ENCODE measurements at regions of chr6 and their contacts with region 1.

Region 1: GRCh38 chr6:128655978-128656498 is 135.6 kb upstream of the PTPRK start:
- DNase-seq: peak; percentile 16
- H3K4me3 Mint-ChIP-seq: no peak overlapping the region
- H3K27ac Mint-ChIP-seq: peak overlapping the region; percentile 74
- H3K4me1 Mint-ChIP-seq: peaks cover 31% of the 10 kb centered on the region
- H3K27me3 Mint-ChIP-seq: peaks cover 10% of the 10 kb centered on the region

Region 2: GRCh38 chr6:128520436-128521281 is 135.4 kb before region 1 on chr6 and contains the start of gene PTPRK:
- CTCF ChIA-PET with region 1: no interaction called
- POLR2A ChIA-PET with region 1: no interaction called
- intact Hi-C with region 1: loop called (anchors 5 kb)
- DNase-seq: peak; percentile 92
- H3K4me3 Mint-ChIP-seq: peak within 1 kb of the TSS; percentile 85
- H3K27ac Mint-ChIP-seq: peak within 1 kb of the TSS; percentile 23
- H3K4me1 Mint-ChIP-seq: peaks cover 9% of the 10 kb centered on the region
- H3K27me3 Mint-ChIP-seq: peaks cover 55% of the 10 kb centered on the region
- total RNA-seq, gene PTPRK: 1.8 to 2.2 TPM

Region 3: GRCh38 chr6:128598565-128598964 is 57.5 kb before region 1 on chr6:
- CTCF ChIA-PET with region 1: no interaction called
- POLR2A ChIA-PET with region 1: no interaction called
- intact Hi-C with region 1: loop called (anchors 1 kb)
- DNase-seq: no peak
- H3K4me3 Mint-ChIP-seq: no peak overlapping the region
- H3K27ac Mint-ChIP-seq: no peak overlapping the region
- H3K4me1 Mint-ChIP-seq: peaks cover 6% of the 10 kb centered on the region
- H3K27me3 Mint-ChIP-seq: peaks cover 12% of the 10 kb centered on the region

Region 4: DNA sequence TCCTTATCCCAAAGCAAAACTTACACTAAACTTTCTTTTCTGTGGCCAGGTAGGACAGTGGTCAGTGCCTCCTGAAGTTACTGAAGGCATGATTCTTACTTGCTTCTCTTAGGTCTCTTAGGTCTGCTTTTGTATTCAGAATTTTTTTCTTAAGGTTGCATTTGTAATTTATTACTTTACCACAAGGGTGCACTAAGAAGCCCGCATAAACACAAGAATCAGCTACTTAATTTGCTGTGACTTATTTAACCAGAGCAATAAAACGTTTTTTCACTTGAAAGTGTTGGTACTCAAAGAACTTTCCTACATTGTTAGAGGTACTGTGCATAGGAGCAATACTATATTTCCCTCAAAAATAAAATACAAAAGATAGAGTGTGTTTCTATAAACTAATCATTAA is 151.5 kb after region 1 on chr6:
- CTCF ChIA-PET with region 1: no interaction called
- POLR2A ChIA-PET with region 1: no interaction called
- intact Hi-C with region 1: no loop called
- DNase-seq: no peak
- H3K4me3 Mint-ChIP-seq: no peak overlapping the region
- H3K27ac Mint-ChIP-seq: no peak overlapping the region
- H3K4me1 Mint-ChIP-seq: no peaks in the 10 kb centered on the region
- H3K27me3 Mint-ChIP-seq: no peaks in the 10 kb centered on the region